ENCODE measurements at regions of chr11 and their contacts with region 1.

Region 1: GRCh38 chr11:9460322-9461067 is at the start of gene ZNF143:
- DNase-seq: peak; percentile 97 to 100
- ATAC-seq: peak; percentile 92 to 93
- H3K4me3 ChIP-seq: peak within 1 kb of the TSS; percentile 83
- H3K27ac ChIP-seq: peak within 1 kb of the TSS; percentile 99
- H3K4me1 ChIP-seq: peaks cover 20% of the 10 kb centered on the region
- CTCF ChIP-seq: no peak
- EP300 ChIP-seq: no peak
- POLR2A ChIP-seq: peak; percentile 80
- RAD21 ChIP-seq: no peak
- polyA plus RNA-seq, gene ZNF143: 37.7 and 38.4 TPM in 2 replicates

Region 2: GRCh38 chr11:9473408-9473807 is 12.9 kb after region 1 on chr11:
- CTCF ChIA-PET with region 1: interaction called, 3 read pairs
- POLR2A ChIA-PET with region 1: interaction called, 12 read pairs
- DNase-seq: no peak
- ATAC-seq: no peak
- H3K4me3 ChIP-seq: no peak overlapping the region
- H3K27ac ChIP-seq: no peak overlapping the region
- H3K4me1 ChIP-seq: no peaks in the 10 kb centered on the region
- CTCF ChIP-seq: no peak
- EP300 ChIP-seq: no peak
- POLR2A ChIP-seq: no peak
- RAD21 ChIP-seq: no peak

Region 3: DNA sequence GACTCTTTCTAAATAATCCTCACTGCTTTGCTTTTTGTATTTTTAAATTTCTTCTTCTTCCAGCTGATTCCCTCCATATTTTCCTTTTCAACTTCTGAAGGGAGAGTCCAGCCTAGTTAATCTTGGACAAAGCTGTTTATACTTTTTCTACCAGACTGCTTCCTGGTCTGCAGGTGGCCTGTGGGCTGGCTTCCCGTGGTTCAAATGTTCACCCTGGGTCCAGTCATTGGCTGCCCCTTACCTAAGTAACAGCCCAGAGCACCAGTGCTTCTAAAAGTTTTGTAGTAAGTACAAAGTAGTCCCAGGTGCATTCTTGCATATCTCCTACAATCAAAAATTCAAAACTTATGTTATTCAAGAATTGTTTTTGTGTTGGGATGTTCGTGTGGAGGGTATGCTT is 19.4 kb after region 1 on chr11:
- CTCF ChIA-PET with region 1: interaction called, 3 read pairs
- POLR2A ChIA-PET with region 1: interaction called, 12 read pairs
- DNase-seq: no peak
- ATAC-seq: no peak
- H3K4me3 ChIP-seq: no peak overlapping the region
- H3K27ac ChIP-seq: no peak overlapping the region
- H3K4me1 ChIP-seq: no peaks in the 10 kb centered on the region
- CTCF ChIP-seq: no peak
- EP300 ChIP-seq: no peak
- POLR2A ChIP-seq: no peak
- RAD21 ChIP-seq: no peak

Region 4: GRCh38 chr11:9573052-9573774 is 112.7 kb after region 1 on chr11 and contains the start of gene WEE1:
- CTCF ChIA-PET with region 1: no interaction called
- POLR2A ChIA-PET with region 1: interaction called, 46 read pairs
- DNase-seq: peak; percentile 96 to 99
- ATAC-seq: peak; percentile 82 to 93
- H3K4me3 ChIP-seq: peak within 1 kb of the TSS; percentile 89
- H3K27ac ChIP-seq: peak within 1 kb of the TSS; percentile 95
- H3K4me1 ChIP-seq: peaks cover 53% of the 10 kb centered on the region
- CTCF ChIP-seq: no peak
- EP300 ChIP-seq: no peak
- POLR2A ChIP-seq: peak; percentile 47
- RAD21 ChIP-seq: no peak
- polyA plus RNA-seq, gene WEE1: 32.8 and 41.3 TPM in 2 replicates